ENCODE measurements at regions of chr10 and their contacts with region 1.

Region 1: DNA sequence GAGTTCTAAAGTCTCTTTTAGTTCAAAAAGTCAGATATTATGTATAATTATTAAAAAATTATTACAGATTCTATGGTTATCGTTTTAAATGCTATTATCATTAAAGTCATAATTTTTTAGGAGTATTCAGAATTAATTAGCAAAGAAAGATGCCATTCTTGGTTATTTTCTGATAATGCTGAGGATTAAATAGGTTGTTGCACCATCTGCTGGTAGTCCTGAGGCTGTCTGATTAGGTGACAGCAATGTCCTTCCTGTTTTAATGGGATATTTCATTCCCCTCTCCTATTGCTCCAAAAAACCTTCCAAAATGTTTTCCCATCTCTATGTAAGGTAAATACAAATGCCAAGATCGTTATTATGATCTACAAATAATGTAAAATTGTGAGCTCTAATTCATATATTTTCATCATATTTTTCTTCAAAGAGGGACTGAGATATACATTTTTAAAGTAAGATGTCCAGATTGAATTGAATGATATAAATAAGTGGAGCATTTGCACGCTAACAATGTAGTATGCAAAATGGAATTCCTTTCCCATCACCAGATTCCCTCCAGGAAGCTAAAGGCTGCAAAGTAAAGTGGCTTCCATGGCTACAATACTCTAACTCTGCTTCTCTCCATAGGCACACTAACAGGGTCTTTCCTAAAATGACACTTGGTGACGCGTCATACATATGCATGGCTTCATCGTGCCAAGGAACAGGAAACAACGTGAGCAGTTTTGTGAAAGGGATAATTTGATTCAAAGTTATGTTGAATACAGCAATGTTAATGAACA is 58.8 kb upstream of the AKR1E2 start:
- DNase-seq: no peak
- H3K4me3 ChIP-seq: no peak overlapping the region
- H3K27me3 ChIP-seq: no peaks in the 10 kb centered on the region
- CTCF ChIP-seq: peak; percentile 61

Region 2: DNA sequence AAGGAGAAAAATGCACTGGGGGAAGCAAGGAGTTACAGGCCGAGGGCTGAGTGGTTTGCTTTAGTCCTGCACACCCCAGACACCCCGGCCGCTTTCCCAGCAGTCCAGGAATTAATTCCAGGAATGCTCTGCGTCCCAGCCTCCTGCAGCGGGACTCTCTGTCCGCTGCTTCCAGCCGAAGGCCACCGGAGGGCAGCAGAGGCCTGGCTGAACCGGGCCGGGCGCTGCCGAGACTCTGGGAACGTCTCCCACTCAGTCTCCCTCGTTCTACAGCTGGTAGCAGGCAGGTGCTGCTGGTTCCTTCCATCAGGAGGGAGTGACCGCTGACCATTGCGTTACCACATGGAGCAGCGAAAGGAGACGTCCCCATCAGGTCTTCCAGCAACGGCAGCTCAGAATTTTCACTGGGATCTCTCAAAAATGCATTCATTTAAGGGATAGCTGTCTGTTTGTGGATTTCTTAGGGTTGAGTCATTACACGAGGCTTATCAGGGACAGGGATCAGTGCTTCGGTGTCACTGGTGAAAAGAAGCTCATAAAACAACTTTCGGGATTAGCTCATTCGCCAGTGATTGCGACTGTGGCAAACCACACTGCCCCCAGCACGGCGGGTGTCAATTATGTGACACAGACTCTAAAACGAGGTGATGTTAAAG is 1569.7 kb before region 1 on chr10:
- CTCF ChIA-PET with region 1: interaction called, 10 read pairs
- POLR2A ChIA-PET with region 1: interaction called, 3 read pairs
- DNase-seq: peak; percentile 62
- H3K4me3 ChIP-seq: peak overlapping the region; percentile 32
- H3K27me3 ChIP-seq: peaks cover 29% of the 10 kb centered on the region
- CTCF ChIP-seq: peak; percentile 98

Region 3: GRCh38 chr10:4488904-4489303 is 278.3 kb before region 1 on chr10:
- CTCF ChIA-PET with region 1: no interaction called
- POLR2A ChIA-PET with region 1: no interaction called
- DNase-seq: no peak
- H3K4me3 ChIP-seq: no peak overlapping the region
- H3K27me3 ChIP-seq: no peaks in the 10 kb centered on the region
- CTCF ChIP-seq: no peak

Region 4: DNA sequence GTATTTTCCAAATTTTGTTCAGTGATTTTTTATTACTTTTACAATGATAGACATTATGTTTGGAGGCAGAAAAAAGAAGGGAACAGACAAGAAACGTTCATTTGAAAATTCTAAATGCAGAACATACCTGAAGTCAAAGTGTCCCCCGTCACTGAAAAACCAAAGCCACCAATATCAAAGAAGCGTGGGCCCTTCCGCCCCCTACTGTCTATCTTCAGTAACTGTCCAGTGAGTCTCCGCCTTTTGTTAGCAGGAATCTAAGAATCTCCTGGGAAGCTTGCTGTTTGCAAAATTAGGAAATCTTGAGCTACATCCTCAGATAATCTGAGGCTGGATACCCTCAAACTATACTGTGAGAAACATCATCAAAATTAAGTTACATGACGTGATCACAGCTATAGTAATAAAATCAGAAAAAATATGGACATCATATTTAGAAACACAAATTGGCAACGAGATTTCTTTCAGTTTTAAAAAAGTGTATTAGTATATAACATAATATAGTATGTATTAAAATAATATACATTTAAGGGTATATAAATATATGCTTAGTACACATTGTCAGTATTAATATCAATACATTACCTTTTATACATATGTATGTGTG is 110.5 kb before region 1 on chr10:
- CTCF ChIA-PET with region 1: interaction called, 13 read pairs
- POLR2A ChIA-PET with region 1: no interaction called
- DNase-seq: no peak
- H3K4me3 ChIP-seq: no peak overlapping the region
- H3K27me3 ChIP-seq: no peaks in the 10 kb centered on the region
- CTCF ChIP-seq: peak; percentile 90

Region 5: GRCh38 chr10:4678023-4678950 is 88.9 kb before region 1 on chr10:
- CTCF ChIA-PET with region 1: no interaction called
- POLR2A ChIA-PET with region 1: interaction called, 14 read pairs
- DNase-seq: peak; percentile 66
- H3K4me3 ChIP-seq: no peak overlapping the region
- H3K27me3 ChIP-seq: no peaks in the 10 kb centered on the region
- CTCF ChIP-seq: no peak

Region 6: DNA sequence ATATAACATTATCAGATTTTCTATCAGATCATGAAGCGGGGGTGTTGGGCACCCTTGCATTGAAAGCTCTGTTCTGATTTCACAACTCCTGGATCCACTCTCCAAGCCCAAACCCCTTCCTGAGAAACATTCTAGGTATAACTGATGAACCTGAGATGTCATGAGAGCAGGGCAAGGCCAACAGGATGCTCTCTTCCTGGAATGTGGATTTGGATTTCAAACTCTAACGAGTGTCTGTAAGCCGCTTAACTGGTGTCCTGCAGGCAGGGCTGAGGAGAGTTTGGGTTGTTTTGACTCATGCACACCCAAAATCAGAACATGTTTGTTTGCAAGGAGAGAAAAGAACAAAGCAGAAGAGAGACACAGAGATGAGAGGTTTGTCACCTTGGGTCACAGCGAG is 34.1 kb after region 1 on chr10:
- CTCF ChIA-PET with region 1: no interaction called
- POLR2A ChIA-PET with region 1: no interaction called
- DNase-seq: no peak
- H3K4me3 ChIP-seq: no peak overlapping the region
- H3K27me3 ChIP-seq: no peaks in the 10 kb centered on the region
- CTCF ChIP-seq: no peak

Region 7: DNA sequence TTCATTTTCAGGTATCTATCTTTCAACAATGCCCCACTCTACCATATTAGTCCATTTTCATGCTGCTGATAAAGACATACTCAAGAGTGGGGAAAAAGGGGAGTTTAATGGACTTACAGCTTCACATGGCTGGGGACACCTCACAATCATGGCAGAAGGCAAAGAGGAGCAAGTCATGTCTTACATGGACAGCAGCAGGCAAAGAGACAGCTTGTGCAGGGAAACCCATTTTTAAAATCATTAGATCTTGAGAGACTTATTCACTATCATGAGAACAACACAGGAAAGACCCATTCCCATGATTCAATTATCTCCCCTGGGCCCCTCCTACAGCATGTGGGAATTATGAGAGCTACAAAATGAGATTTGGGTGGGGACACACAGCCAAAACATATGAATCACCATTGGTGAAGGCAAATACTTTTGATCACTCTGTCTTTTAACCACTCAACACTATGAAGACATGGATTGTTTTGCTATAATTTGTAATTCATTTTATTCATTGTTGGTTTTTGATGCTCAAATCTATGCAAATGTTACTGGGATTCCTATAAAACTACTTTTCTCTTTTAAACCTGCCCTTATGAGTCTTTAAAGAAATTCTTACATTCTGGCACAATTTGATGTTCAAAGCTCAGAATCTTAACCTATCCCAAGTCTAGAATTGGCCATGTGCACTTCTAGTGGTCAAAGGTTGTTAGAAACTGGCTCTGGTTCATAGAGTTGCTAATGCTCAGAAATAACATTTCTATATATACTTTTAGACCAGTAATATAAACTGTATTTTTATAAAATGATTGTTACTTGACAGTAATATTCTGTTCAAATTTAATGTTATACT is 444.7 kb after region 1 on chr10:
- CTCF ChIA-PET with region 1: no interaction called
- POLR2A ChIA-PET with region 1: no interaction called
- DNase-seq: no peak
- H3K4me3 ChIP-seq: no peak overlapping the region
- H3K27me3 ChIP-seq: 0 out of 2 replicates have a peak, but pooled peaks cover 1% of the 10 kb centered on the region
- CTCF ChIP-seq: no peak